Activated CD4-positive, alpha-beta T cell treated with anti-CD3 and anti-CD28 coated beads for 36 hours (primary cell): ENCODE measurements at regions of chr10 and their contacts with region 1.

Region 1: GRCh38 chr10:115129752-115130151 is 36.6 kb downstream of the ATRNL1 start:
- DNase-seq: no peak
- ATAC-seq: no peak
- H3K4me3 Mint-ChIP-seq: no peak overlapping the region
- H3K27ac Mint-ChIP-seq: no peak overlapping the region
- H3K4me1 Mint-ChIP-seq: no peaks in the 10 kb centered on the region
- H3K27me3 Mint-ChIP-seq: peaks cover 4% of the 10 kb centered on the region

Region 2: DNA sequence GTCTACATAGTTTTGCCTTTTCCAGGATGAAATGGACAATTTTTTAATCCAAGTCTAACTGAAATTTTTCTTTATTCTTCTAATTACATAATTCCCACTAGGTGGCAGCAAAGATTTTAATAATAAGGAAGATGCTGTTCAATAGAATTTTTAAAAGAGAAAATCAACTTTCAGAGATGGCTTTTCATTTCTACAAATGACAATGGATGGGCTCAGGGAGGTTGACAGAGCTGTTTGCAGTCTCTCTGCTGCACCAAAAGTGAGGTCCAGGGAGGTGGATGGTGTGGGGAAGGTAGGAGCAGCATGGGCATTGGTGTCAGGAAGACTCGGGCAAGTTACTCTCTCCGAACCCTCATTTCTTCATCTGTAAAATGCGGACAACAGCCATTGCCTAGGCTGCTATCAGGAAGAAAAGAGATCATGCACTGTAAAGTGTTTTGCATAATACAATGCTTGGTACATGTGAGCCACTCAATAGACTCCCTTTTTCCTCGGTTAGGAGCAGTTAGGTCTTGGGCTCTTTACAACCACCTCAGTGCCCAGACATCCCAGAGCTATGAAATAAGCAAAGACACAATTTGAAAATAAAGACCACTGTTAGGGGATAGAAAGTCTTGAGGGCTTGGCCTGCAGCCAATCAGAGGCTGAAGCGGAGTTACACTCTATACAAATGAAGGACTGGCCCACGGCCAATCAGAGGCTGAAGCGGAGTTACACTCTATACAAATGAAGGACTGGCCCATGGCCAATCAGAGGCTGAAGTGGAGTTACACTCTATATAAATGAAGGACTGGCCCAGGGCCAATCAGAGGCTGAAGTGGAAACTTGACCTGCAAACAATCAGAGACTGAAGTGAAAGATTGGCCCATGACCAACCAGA is 578.8 kb before region 1 on chr10:
- CTCF ChIA-PET with region 1: interaction called, 9 read pairs
- POLR2A ChIA-PET with region 1: no interaction called
- intact Hi-C with region 1: loop called (anchors 1 to 5 kb)
- DNase-seq: no peak
- ATAC-seq: no peak
- H3K4me3 Mint-ChIP-seq: no peak overlapping the region
- H3K27ac Mint-ChIP-seq: no peak overlapping the region
- H3K4me1 Mint-ChIP-seq: peaks cover 28% of the 10 kb centered on the region
- H3K27me3 Mint-ChIP-seq: no peaks in the 10 kb centered on the region

Region 3: DNA sequence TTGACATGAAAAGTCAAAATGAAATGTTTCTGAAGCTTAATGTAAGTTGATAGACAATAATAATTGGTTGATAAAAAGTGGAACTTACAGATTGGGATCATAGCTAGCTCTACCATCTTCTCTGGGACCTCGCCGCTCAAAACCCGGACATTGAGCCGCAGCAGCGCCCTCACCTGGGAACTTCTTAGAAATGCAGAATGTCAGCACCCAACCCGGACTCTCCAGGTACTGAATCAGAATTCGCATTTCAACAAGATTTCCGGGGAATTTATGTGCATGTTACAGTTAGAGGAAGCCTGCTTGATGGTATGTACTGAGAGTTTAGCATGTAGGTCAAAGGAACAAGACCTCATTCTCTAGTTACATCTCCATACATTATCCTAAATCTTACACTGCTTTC is 435.0 kb before region 1 on chr10:
- CTCF ChIA-PET with region 1: no interaction called
- POLR2A ChIA-PET with region 1: no interaction called
- intact Hi-C with region 1: loop called in 1 of 2 experiments (anchors 10 kb)
- DNase-seq: peak; percentile 69
- ATAC-seq: no peak
- H3K4me3 Mint-ChIP-seq: no peak overlapping the region
- H3K27ac Mint-ChIP-seq: no peak overlapping the region
- H3K4me1 Mint-ChIP-seq: peaks cover 10% of the 10 kb centered on the region
- H3K27me3 Mint-ChIP-seq: peaks cover 4% of the 10 kb centered on the region